ENCODE measurements at regions of chr12 and their contacts with region 1.

Region 1: GRCh38 chr12:132414634-132415326 is 75.2 kb upstream of the FBRSL1 start:
- DNase-seq: peak; percentile 84
- H3K4me3 Mint-ChIP-seq: no peak overlapping the region
- H3K27ac Mint-ChIP-seq: peak overlapping the region; percentile 54
- H3K4me1 Mint-ChIP-seq: peaks cover 5% of the 10 kb centered on the region
- H3K27me3 Mint-ChIP-seq: peaks cover 7% of the 10 kb centered on the region

Region 2: DNA sequence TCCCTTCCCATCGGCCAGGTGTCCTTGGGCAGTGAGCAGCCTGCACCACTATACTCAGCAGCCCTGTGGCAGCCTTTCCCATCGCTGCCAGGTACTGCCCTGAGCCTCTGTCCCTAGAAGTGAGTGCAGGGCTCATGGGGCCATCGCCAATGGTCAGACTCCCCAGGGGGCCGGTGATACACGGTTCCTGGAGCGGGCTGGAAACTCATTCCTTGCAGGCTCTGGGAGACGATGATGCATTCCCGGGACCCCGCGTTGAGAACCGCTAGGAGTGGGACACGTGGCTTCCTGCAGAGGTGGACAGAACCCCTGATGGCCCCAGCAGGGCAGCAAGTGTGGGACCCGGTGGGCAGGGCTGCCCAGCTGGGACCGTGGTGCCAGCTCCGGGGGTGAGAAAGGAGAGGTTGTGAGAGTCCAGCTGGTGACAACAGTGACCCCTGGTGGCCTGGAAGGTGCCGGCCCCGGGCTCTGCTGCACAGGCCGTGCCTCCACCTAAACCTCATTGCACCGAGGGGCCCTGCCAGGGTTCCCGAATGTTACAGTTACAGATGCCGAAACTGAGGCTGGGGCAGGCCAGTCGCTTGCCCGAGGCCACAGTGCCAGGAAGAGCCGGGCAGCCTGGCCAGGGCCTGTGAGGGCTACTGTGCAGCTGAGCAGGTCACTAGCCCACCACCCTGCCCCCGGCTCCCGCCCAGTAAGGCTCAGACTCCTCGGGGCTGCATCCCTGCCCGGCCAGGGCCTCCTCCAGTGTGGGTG is 109.0 kb after region 1 on chr12:
- CTCF ChIA-PET with region 1: interaction called, 21 read pairs
- POLR2A ChIA-PET with region 1: no interaction called
- DNase-seq: peak; percentile 78
- H3K4me3 Mint-ChIP-seq: no peak overlapping the region
- H3K27ac Mint-ChIP-seq: no peak overlapping the region
- H3K4me1 Mint-ChIP-seq: peaks cover 4% of the 10 kb centered on the region
- H3K27me3 Mint-ChIP-seq: no peaks in the 10 kb centered on the region

Region 3: GRCh38 chr12:132560614-132561426 is 146.0 kb after region 1 on chr12:
- CTCF ChIA-PET with region 1: interaction called, 12 read pairs
- POLR2A ChIA-PET with region 1: no interaction called
- DNase-seq: peak; percentile 79
- H3K4me3 Mint-ChIP-seq: peak overlapping the region; percentile 66
- H3K27ac Mint-ChIP-seq: no peak overlapping the region
- H3K4me1 Mint-ChIP-seq: peaks cover 19% of the 10 kb centered on the region
- H3K27me3 Mint-ChIP-seq: peaks cover 10% of the 10 kb centered on the region

Region 4: GRCh38 chr12:132614861-132615578 is 200.2 kb after region 1 on chr12:
- CTCF ChIA-PET with region 1: interaction called, 16 read pairs
- POLR2A ChIA-PET with region 1: no interaction called
- DNase-seq: peak; percentile 85
- H3K4me3 Mint-ChIP-seq: no peak overlapping the region
- H3K27ac Mint-ChIP-seq: no peak overlapping the region
- H3K4me1 Mint-ChIP-seq: peaks cover 11% of the 10 kb centered on the region
- H3K27me3 Mint-ChIP-seq: peaks cover 34% of the 10 kb centered on the region

Measured in activated CD4-positive, alpha-beta T cell treated with anti-CD3 and anti-CD28 coated beads, Interleukin-2, amount 10 ng/mL, durations not matched to agents 7 days and 5 days (primary cell).